IMR-90 (cell line): ENCODE measurements at regions of chr7 and their contacts with region 1.

Region 1: GRCh38 chr7:24665564-24666294 is 91.5 kb downstream of the GSDME start:
- DNase-seq: peak; percentile 58
- ATAC-seq: peak; percentile 70
- H3K4me3 ChIP-seq: no peak overlapping the region
- H3K27ac ChIP-seq: no peak overlapping the region
- H3K4me1 ChIP-seq: peaks cover 3% of the 10 kb centered on the region
- H3K27me3 ChIP-seq: no peaks in the 10 kb centered on the region
- CTCF ChIP-seq: peak; percentile 74
- POLR2A ChIP-seq: no peak
- RAD21 ChIP-seq: peak; percentile 74

Region 2: DNA sequence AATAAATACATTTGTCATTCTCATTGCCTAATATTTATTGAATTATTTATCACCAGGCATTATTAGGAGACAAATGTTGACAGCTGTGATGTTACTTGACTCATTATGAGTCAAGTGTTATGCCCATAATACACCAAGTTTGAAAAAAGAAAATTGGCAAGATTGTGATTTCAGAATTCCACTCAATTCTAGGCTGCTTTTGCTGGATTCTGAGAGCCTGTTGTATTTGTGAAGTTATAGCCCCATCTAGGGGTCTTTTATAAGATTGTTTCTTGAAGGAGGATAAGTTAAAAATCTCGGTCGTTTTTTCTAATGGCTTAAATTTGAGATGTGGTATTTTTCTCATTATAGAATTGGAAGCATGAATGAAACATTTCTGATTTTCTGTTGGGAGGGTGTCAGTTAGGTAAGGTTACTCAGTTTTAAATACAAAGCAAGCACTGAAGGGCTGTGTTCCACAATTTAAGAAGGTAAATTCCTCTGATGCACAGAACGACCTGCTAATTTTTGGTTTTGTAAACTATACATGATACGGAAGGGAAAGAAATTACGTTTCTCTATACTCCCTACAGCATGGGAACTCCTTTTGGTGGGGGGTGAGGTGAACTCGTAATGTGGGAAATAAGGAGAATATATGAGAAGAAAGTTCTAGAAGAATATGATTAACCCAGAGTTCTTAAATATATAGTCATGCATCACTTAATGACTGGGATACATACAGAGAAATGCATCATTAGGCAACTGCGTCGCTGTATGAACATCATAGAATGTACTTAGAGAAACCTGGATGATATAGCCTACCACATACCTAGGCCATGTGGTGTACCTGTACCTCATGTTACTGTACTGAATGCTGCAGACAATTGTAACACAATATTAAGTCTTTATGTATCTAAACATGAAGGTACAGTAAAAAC is 953.1 kb before region 1 on chr7:
- CTCF ChIA-PET with region 1: no interaction called
- POLR2A ChIA-PET with region 1: no interaction called
- dilution Hi-C with region 1: no loop called
- in situ Hi-C with region 1: no loop called
- intact Hi-C with region 1: loop called (anchors 5 kb)
- DNase-seq: peak; percentile 78
- ATAC-seq: peak; percentile 24; the same call in 1 of the 2 replicates
- H3K4me3 ChIP-seq: no peak overlapping the region
- H3K27ac ChIP-seq: no peak overlapping the region
- H3K4me1 ChIP-seq: peaks cover 2% of the 10 kb centered on the region; the same call in 1 of the 2 replicates
- H3K27me3 ChIP-seq: no peaks in the 10 kb centered on the region
- CTCF ChIP-seq: peak; percentile 87
- POLR2A ChIP-seq: no peak
- RAD21 ChIP-seq: peak; percentile 92

Region 3: GRCh38 chr7:23938937-23939552 is 726.7 kb before region 1 on chr7:
- CTCF ChIA-PET with region 1: no interaction called
- POLR2A ChIA-PET with region 1: no interaction called
- dilution Hi-C with region 1: no loop called
- in situ Hi-C with region 1: loop called (anchors 25 kb)
- intact Hi-C with region 1: no loop called
- DNase-seq: peak; percentile 11
- ATAC-seq: peak; percentile 85
- H3K4me3 ChIP-seq: no peak overlapping the region
- H3K27ac ChIP-seq: no peak overlapping the region
- H3K4me1 ChIP-seq: no peaks in the 10 kb centered on the region
- H3K27me3 ChIP-seq: no peaks in the 10 kb centered on the region
- CTCF ChIP-seq: peak; percentile 30; the same call in 1 of the 2 replicates
- POLR2A ChIP-seq: no peak
- RAD21 ChIP-seq: peak; percentile 37

Region 4: DNA sequence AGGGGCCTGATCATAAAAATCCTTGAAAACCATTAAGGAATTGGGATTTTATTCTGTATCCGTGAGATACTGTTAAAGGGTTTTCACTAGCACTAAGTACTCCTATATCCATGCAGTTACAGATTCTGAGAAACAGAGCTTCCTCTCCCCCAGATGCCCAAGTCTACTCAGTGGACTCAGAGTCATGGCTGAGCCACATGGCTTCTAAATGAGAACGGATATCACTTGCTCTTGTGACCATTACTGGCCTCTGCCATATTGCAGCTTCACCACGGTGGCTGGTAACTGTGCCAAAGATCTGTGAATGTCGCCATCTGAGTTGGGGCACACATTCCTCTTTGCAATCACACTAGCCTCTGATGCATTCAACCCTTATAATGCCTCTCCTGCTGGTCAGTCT is 134.5 kb before region 1 on chr7:
- CTCF ChIA-PET with region 1: no interaction called
- POLR2A ChIA-PET with region 1: no interaction called
- dilution Hi-C with region 1: no loop called
- in situ Hi-C with region 1: no loop called
- intact Hi-C with region 1: no loop called
- DNase-seq: no peak
- ATAC-seq: no peak
- H3K4me3 ChIP-seq: no peak overlapping the region
- H3K27ac ChIP-seq: no peak overlapping the region
- H3K4me1 ChIP-seq: no peaks in the 10 kb centered on the region
- H3K27me3 ChIP-seq: no peaks in the 10 kb centered on the region; the same call in 1 of the 2 replicates
- CTCF ChIP-seq: no peak
- POLR2A ChIP-seq: no peak
- RAD21 ChIP-seq: no peak

Region 5: DNA sequence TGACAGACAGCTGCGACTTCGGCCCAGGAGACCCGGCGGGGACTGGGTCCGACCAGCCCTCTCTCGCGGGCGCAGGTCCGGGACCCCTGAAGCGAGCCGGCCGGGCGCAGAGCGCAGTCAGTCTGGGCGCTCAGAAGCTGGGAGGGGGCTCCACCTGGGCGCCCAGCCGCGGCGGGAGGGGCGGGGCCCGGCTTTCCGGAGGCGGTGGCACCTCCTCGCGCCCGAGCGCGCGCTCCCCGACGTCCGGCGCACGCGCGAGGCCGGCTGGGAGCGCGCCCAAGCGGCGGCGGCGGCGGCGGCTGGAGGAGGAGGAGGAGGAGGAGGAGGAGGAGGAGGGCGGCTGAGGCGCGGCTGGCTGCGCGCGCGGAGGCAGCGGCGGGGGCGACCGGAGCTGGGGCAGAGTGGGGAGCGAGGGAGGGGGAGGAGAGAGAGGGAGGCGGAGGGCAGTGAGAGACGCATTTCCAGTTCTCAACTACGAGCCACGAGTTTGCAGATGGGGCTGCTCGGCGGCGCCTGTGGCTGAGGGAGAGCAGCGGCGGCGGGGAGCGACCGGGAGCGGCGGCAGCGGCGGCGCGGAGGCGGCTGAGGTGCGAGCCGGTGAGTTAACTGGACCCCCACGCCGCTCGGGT is 92.6 kb before region 1 on chr7 and contains the start of gene PALS2:
- CTCF ChIA-PET with region 1: interaction called, 5 read pairs
- POLR2A ChIA-PET with region 1: no interaction called
- dilution Hi-C with region 1: no loop called
- in situ Hi-C with region 1: loop called (anchors 10 kb)
- intact Hi-C with region 1: loop called (anchors 1 kb)
- DNase-seq: peak; percentile 58
- ATAC-seq: peak; percentile 76
- H3K4me3 ChIP-seq: peak within 1 kb of the TSS; percentile 98
- H3K27ac ChIP-seq: peak within 1 kb of the TSS; percentile 65
- H3K4me1 ChIP-seq: 0 out of 2 replicates have a peak, but pooled peaks cover 2% of the 10 kb centered on the region
- H3K27me3 ChIP-seq: peaks cover 26% of the 10 kb centered on the region
- CTCF ChIP-seq: no peak
- POLR2A ChIP-seq: no peak
- RAD21 ChIP-seq: no peak
- total RNA-seq, gene PALS2: 15.4 and 29.7 TPM in 2 replicates